MCF 10A (cell line): ENCODE measurements at regions of chr19 and their contacts with region 1.

Region 1: DNA sequence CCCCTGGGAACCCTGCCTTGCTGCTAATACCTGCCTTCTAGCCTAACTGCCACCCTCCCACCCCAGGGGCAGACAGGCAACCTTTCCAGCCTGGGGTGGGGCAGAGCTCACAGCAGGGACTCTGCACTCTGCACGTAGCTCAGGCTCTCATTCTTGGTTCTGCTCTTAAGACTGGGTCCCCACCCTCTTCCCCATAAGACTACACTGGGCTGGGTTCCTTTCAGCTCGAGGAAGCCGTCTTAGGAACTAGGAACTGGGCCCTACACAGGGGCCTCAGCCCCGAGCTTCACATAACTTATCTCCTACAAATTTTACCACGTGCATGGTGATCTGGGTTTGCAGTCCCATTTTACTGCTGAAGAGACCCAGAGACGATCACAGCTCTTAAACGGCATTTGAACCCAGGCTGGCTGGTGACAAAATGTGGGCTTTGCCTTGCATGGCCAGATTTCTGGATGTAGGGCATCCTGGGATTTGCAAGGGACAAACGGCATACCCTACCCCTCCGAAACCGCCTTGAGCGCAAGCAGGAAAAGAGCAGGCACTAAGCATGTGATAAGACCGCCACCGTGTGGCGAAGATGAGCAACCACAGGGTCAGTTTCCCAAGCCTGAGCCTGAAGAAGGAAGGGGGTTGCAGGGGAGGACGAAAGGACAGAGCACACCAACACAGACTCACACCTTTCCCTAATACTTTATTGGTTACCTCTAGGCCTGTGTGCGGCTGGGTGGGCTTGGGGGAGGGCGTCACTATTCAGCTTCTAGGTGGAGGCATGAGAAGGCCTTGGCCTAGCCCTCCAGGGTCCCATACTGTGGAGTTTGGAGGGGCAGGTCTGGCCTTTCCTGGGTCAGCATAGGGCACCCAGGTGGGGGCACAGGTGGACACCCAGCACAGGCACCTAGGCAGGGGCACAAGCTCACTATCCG is 5.1 kb downstream of the JUNB start:
- DNase-seq: peak; percentile 87
- H3K4me3 Mint-ChIP-seq: peak overlapping the region; percentile 35
- H3K27ac Mint-ChIP-seq: peak overlapping the region; percentile 84
- H3K4me1 Mint-ChIP-seq: peaks cover 18% of the 10 kb centered on the region
- H3K27me3 Mint-ChIP-seq: no peaks in the 10 kb centered on the region
- CTCF ChIP-seq: peak; percentile 94

Region 2: GRCh38 chr19:12656899-12657571 is 139.4 kb before region 1 on chr19:
- CTCF ChIA-PET with region 1: no interaction called
- POLR2A ChIA-PET with region 1: no interaction called
- intact Hi-C with region 1: no loop called
- DNase-seq: no peak
- H3K4me3 Mint-ChIP-seq: no peak overlapping the region
- H3K27ac Mint-ChIP-seq: no peak overlapping the region
- H3K4me1 Mint-ChIP-seq: no peaks in the 10 kb centered on the region
- H3K27me3 Mint-ChIP-seq: no peaks in the 10 kb centered on the region
- CTCF ChIP-seq: no peak

Region 3: GRCh38 chr19:12757544-12758274 is 38.7 kb before region 1 on chr19:
- CTCF ChIA-PET with region 1: interaction called, 307 read pairs
- POLR2A ChIA-PET with region 1: interaction called, 8 read pairs
- intact Hi-C with region 1: loop called (anchors 1 kb)
- DNase-seq: peak; percentile 72
- H3K4me3 Mint-ChIP-seq: peak overlapping the region; percentile 35
- H3K27ac Mint-ChIP-seq: no peak overlapping the region
- H3K4me1 Mint-ChIP-seq: peaks cover 5% of the 10 kb centered on the region
- H3K27me3 Mint-ChIP-seq: no peaks in the 10 kb centered on the region
- CTCF ChIP-seq: peak; percentile 97

Region 4: DNA sequence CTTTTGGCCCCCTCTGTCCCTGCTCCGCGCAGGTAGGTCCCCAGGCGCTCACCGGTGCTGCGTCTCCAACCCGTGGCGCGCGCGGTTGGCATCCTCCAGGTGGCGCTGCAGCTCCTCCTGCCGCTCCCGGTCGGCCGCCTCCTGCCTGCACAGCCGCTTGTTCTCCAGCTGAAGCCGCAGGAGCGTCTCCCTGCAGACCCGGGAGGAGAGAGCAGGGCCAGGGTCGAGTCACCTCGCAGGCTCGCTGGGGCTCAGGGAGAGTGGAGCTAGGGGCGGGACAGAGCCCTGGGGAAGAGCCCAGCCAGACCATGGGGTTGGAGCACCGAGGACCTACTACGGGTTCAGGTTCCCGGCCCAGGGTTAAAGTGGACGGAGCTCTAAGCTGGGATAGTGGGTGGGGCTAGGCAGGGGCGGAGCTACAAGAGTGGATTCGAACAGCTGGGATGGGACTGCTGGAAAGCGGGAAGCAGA is 30.3 kb before region 1 on chr19:
- CTCF ChIA-PET with region 1: interaction called, 307 read pairs
- POLR2A ChIA-PET with region 1: interaction called, 17 read pairs
- intact Hi-C with region 1: loop called (anchors 1 kb)
- DNase-seq: peak; percentile 77
- H3K4me3 Mint-ChIP-seq: peak overlapping the region; percentile 69
- H3K27ac Mint-ChIP-seq: no peak overlapping the region
- H3K4me1 Mint-ChIP-seq: peaks cover 5% of the 10 kb centered on the region
- H3K27me3 Mint-ChIP-seq: no peaks in the 10 kb centered on the region
- CTCF ChIP-seq: peak; percentile 67

Region 5: DNA sequence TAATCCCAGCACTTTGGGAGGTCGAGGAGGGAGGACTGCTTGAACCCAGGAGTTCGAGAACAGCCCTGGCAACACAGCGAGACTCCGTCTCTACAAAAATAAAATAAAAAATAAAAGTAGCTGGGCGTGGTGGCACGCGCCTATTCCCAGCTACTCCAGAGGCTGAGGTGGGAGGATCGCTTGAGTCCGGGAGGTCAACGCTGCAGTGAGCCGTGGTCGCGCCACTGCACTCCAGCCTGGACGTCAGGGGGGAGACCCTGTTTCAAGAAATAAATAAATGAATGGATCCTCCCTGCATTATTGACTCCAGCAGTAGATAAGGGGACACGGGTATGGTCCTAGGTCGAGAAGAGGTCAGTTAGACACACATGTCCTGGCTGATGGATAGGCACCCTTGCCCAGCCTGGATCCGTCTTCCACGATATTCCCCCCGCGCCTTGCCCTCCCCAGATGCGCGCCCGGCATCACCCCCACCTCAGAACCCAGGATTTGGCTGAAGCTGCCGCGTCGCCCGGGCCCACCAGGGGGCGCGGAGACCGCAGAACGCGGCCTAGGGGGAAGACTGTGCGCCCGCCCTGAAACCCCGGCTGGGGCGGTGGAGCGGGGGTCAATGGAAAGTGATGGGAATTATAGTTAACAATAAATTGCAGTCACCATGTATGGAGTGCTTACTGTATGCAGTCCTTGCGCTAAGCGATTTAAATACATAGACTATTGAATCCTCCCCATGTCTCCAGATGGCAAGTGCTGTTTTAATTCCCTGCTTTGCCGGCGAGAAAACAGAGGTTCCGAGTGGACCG is 19.0 kb before region 1 on chr19:
- CTCF ChIA-PET with region 1: interaction called, 278 read pairs
- POLR2A ChIA-PET with region 1: interaction called, 410 read pairs
- intact Hi-C with region 1: loop called (anchors 1 kb)
- DNase-seq: peak; percentile 80
- H3K4me3 Mint-ChIP-seq: peak overlapping the region; percentile 79
- H3K27ac Mint-ChIP-seq: peak overlapping the region; percentile 81
- H3K4me1 Mint-ChIP-seq: peaks cover 13% of the 10 kb centered on the region
- H3K27me3 Mint-ChIP-seq: no peaks in the 10 kb centered on the region
- CTCF ChIP-seq: peak; percentile 83

Region 6: DNA sequence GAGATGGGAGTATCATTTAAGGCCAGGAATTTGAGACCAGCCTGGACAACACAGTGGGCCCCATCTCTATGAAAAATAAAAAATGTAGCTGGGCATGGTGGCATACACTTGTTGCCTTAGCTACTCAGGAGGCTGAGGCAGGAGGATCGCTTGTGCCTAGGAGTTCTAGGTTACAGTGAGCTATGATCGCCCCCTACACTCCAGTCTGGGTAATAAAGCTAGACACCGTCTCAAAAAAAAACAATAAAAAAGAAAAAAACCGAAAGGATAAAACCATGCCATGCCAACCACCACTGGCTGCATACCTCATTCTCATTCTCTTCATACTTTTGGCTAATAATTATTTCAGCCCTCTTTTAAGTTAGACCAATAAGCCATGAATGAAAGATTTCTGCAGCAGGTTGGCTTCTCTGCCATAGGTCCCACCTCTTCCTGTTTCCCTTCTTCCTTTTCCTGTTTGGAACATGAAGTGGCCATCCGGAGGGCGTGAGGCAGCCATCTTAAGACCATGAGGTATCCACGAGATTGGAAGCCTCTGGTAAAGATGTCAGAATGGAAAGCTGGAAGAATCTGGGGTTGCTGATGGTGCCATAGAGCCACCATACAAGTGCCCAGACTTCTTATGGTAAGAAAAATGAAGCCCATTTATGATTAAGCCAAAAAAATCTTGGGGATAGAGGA is 538.5 kb after region 1 on chr19:
- CTCF ChIA-PET with region 1: no interaction called
- POLR2A ChIA-PET with region 1: no interaction called
- intact Hi-C with region 1: no loop called
- DNase-seq: no peak
- H3K4me3 Mint-ChIP-seq: peak overlapping the region; percentile 22
- H3K27ac Mint-ChIP-seq: no peak overlapping the region
- H3K4me1 Mint-ChIP-seq: no peaks in the 10 kb centered on the region
- H3K27me3 Mint-ChIP-seq: peaks cover 36% of the 10 kb centered on the region
- CTCF ChIP-seq: no peak